PC-3 (cell line): ENCODE measurements at regions of chr4 and their contacts with region 1.

Region 1: GRCh38 chr4:187586892-187587291 is 408.7 kb upstream of the ZFP42 start:
- DNase-seq: peak; percentile 84
- ATAC-seq: peak; percentile 88
- H3K4me3 ChIP-seq: peak overlapping the region; percentile 75
- H3K27ac ChIP-seq: peak overlapping the region; percentile 86
- H3K4me1 ChIP-seq: peaks cover 8% of the 10 kb centered on the region
- H3K27me3 ChIP-seq: no peaks in the 10 kb centered on the region
- CTCF ChIP-seq: no peak

Region 2: GRCh38 chr4:186719925-186720694 is 866.8 kb before region 1 on chr4:
- CTCF ChIA-PET with region 1: interaction called, 10 read pairs
- POLR2A ChIA-PET with region 1: no interaction called
- intact Hi-C with region 1: no loop called
- DNase-seq: peak; percentile 50
- ATAC-seq: no peak
- H3K4me3 ChIP-seq: no peak overlapping the region
- H3K27ac ChIP-seq: no peak overlapping the region
- H3K4me1 ChIP-seq: no peaks in the 10 kb centered on the region; the same call in 1 of the 2 replicates
- H3K27me3 ChIP-seq: no peaks in the 10 kb centered on the region
- CTCF ChIP-seq: peak; percentile 64

Region 3: DNA sequence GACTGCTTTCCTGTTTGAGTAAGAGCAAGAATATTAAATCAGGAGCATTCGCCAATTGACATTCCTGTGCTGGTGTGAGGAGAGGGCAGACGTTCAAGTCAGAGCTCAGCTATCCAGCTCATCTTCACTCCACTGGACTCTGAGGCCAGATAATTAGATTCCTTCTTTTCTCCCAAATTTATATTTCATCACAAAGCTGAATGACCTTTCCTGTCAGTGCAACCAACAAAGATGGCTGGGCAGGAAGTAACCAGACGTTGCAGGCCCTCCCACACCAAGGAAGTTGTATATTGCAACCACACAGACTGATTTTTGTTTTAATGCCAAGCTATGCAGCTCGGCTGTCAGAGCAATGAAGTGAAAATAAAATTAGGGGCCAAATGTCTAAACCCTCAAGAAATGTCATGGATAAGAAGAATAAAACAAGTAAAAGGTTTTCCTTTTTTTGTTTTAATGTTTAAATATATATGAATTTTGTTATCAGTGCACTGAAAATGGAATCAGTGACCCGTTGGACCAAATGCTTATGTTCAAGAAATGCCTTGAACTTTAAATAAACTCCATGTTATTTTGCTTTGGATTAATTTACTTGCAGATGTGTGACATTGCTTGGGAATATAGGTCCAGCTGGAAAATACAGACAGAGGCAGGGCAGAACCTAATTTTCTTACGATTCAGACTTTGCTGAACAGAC is 284.3 kb before region 1 on chr4:
- CTCF ChIA-PET with region 1: no interaction called
- POLR2A ChIA-PET with region 1: no interaction called
- intact Hi-C with region 1: loop called (anchors 10 kb)
- DNase-seq: no peak
- ATAC-seq: no peak
- H3K4me3 ChIP-seq: no peak overlapping the region
- H3K27ac ChIP-seq: no peak overlapping the region
- H3K4me1 ChIP-seq: peaks cover 13% of the 10 kb centered on the region; the same call in 1 of the 2 replicates
- H3K27me3 ChIP-seq: no peaks in the 10 kb centered on the region
- CTCF ChIP-seq: no peak